Left colon (tissue), 2 donors: ENCODE measurements at regions of chr1 and their contacts with region 1.

Region 1: DNA sequence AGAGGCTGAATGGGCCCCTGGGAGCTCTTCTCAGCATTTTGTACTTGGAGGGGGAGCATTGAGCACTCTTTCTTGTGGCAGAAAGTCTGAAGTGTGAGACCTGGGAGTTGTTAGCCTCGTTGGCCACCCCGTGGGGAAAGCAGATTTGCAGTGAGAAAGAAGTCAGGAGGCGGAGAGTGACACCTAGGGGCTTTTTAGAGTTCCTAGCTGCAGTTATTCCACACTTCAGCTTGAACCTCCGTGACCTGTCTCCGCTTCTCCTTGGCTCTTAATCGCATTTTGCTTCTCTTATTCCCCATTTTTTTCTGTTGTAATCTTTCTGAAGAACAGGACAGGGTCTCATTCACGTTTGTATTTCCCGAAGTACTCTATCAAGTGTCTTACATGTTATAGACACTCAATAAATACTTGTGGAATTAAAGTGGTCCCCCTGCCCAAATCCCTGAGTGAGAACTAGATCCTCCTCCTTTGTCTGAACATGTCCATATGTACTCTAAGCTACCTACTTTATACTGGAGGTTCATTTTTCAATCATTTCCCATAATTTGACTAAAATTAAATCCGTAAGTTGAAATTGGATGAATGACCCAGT is 14.5 kb upstream of the C1orf141 start:
- DNase-seq: peak; percentile 63 to 70
- ATAC-seq: peak; percentile 100

Region 2: GRCh38 chr1:66764994-66765578 is 384.2 kb before region 1 on chr1:
- intact Hi-C with region 1: loop called in 1 of 2 experiments (anchors 10 kb)
- DNase-seq: peak in 1 of 2 donors; percentile 42
- ATAC-seq: peak; percentile 69

Region 3: GRCh38 chr1:66996018-66996682 is 153.1 kb before region 1 on chr1:
- intact Hi-C with region 1: loop called in 1 of 2 experiments (anchors 2 kb)
- DNase-seq: peak; percentile 54 to 68
- ATAC-seq: peak; percentile 80